Mammary epithelial cell (primary cell): ENCODE measurements at regions of chr6 and their contacts with region 1.

Region 1: GRCh38 chr6:134938896-134939295 is 11.0 kb downstream of the ALDH8A1 start:
- DNase-seq: no peak
- H3K4me3 ChIP-seq: no peak overlapping the region
- H3K27ac ChIP-seq: no peak overlapping the region
- H3K4me1 ChIP-seq: peaks cover 13% of the 10 kb centered on the region
- H3K27me3 ChIP-seq: no peaks in the 10 kb centered on the region
- CTCF ChIP-seq: no peak

Region 2: DNA sequence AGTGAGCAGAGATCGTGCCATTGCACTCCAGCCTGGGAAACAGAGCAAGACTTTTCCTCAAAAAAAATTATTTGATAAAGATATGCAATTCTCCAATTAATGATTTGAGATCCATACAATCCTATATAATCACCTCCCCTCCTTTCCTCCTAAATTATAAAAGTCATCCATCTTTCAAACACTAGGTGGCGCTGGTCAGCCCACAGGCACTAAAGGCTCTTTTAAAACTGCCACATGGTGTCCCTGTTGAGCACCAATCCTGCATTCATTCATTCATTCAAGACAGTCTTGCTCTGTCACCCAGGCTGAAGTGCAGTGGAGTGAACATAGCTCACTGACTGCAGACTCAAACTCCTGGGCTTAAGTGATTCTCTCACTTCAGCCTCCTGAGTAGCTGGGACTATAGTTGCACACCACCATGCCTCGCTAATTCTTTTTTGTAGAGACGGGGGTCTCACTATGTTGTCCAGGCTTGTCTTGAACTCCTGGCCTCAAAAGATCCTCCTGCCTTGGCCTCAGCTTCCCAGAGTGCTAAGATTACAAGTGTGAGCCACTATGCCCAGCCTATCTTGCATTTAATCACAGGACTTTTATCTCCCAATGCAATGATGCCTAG is 827.7 kb before region 1 on chr6:
- CTCF ChIA-PET with region 1: no interaction called
- dilution Hi-C with region 1: no loop called
- in situ Hi-C with region 1: no loop called
- intact Hi-C with region 1: loop called (anchors 1 kb)
- DNase-seq: peak; percentile 52
- H3K4me3 ChIP-seq: no peak overlapping the region
- H3K27ac ChIP-seq: no peak overlapping the region
- H3K4me1 ChIP-seq: no peaks in the 10 kb centered on the region
- H3K27me3 ChIP-seq: no peaks in the 10 kb centered on the region
- CTCF ChIP-seq: peak; percentile 96 to 97

Region 3: GRCh38 chr6:134814086-134814709 is 124.7 kb before region 1 on chr6:
- CTCF ChIA-PET with region 1: no interaction called
- dilution Hi-C with region 1: no loop called
- in situ Hi-C with region 1: no loop called
- intact Hi-C with region 1: no loop called
- DNase-seq: peak; percentile 73
- H3K4me3 ChIP-seq: no peak overlapping the region
- H3K27ac ChIP-seq: no peak overlapping the region
- H3K4me1 ChIP-seq: peaks cover 10% of the 10 kb centered on the region
- H3K27me3 ChIP-seq: no peaks in the 10 kb centered on the region
- CTCF ChIP-seq: no peak

Region 4: DNA sequence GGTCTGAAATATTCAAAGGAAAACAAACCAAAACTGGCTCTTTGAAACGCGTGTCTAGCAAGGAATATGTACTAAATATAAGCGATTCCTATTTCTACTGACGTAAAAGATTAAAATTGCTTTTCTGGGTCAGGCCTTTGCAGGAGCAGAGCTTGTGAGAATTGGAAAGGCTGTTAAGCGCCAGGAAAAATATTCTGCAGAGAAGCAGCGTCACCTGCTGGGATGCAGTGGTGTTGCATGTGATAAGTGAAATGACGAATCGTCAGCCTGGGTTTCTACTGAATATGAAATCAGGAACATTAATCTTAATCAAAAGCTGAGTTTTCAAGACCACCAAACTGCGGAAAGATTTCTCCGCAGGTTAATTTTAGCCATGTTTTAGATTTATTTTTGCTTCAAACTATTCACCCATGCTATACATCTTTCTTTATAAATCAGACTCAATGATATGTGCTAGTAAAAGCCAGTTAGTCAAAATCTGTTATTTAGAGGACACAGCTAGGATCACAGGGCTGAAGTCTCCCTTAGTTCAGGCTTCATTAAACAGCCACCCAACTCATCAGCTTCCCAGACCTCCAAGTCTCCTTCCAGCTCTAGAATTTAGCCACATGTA is 56.4 kb before region 1 on chr6:
- CTCF ChIA-PET with region 1: no interaction called
- dilution Hi-C with region 1: no loop called
- in situ Hi-C with region 1: no loop called
- intact Hi-C with region 1: loop called (anchors 1 kb)
- DNase-seq: peak; percentile 67
- H3K4me3 ChIP-seq: no peak overlapping the region
- H3K27ac ChIP-seq: no peak overlapping the region
- H3K4me1 ChIP-seq: no peaks in the 10 kb centered on the region
- H3K27me3 ChIP-seq: no peaks in the 10 kb centered on the region
- CTCF ChIP-seq: peak; percentile 98

Region 5: DNA sequence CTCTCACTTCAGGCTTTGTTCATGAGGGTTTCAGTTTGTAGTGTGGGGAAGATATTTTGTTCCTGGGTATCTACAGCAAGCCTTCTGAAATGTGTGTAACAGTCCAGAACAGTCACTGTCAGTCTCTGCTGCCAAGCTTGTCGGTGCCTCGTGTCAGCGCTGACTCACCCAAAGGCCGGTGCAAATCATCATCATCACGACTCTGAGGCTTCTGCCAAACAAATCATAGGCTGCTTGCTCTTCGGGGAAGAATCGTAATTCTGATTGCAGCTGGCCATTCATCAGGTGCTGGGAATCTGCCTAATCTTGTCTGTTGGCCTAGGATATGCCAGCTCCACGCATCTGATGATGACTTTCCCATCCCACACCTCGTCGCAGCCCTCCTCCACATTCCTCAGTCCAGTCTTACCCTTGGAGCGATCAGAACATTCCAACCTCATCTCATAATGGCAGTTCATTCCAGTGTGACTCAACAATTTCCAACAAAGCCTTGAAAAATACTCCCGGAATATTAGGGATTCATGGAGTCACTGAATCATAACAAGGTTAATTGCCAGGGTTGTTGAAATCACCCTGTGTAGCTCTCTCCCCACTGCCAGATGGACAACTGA is 29.9 kb before region 1 on chr6:
- CTCF ChIA-PET with region 1: no interaction called
- dilution Hi-C with region 1: no loop called
- in situ Hi-C with region 1: no loop called
- intact Hi-C with region 1: loop called (anchors 1 kb)
- DNase-seq: peak; percentile 100
- H3K4me3 ChIP-seq: no peak overlapping the region
- H3K27ac ChIP-seq: peak overlapping the region; percentile 99
- H3K4me1 ChIP-seq: peaks cover 41% of the 10 kb centered on the region
- H3K27me3 ChIP-seq: no peaks in the 10 kb centered on the region
- CTCF ChIP-seq: no peak

Region 6: GRCh38 chr6:135062735-135063134 is 123.8 kb after region 1 on chr6:
- CTCF ChIA-PET with region 1: no interaction called
- dilution Hi-C with region 1: no loop called
- in situ Hi-C with region 1: no loop called
- intact Hi-C with region 1: no loop called
- DNase-seq: no peak
- H3K4me3 ChIP-seq: no peak overlapping the region
- H3K27ac ChIP-seq: no peak overlapping the region
- H3K4me1 ChIP-seq: no peaks in the 10 kb centered on the region
- H3K27me3 ChIP-seq: no peaks in the 10 kb centered on the region
- CTCF ChIP-seq: no peak